H1 (cell line): ENCODE measurements at regions of chr10 and their contacts with region 1.

Region 1: DNA sequence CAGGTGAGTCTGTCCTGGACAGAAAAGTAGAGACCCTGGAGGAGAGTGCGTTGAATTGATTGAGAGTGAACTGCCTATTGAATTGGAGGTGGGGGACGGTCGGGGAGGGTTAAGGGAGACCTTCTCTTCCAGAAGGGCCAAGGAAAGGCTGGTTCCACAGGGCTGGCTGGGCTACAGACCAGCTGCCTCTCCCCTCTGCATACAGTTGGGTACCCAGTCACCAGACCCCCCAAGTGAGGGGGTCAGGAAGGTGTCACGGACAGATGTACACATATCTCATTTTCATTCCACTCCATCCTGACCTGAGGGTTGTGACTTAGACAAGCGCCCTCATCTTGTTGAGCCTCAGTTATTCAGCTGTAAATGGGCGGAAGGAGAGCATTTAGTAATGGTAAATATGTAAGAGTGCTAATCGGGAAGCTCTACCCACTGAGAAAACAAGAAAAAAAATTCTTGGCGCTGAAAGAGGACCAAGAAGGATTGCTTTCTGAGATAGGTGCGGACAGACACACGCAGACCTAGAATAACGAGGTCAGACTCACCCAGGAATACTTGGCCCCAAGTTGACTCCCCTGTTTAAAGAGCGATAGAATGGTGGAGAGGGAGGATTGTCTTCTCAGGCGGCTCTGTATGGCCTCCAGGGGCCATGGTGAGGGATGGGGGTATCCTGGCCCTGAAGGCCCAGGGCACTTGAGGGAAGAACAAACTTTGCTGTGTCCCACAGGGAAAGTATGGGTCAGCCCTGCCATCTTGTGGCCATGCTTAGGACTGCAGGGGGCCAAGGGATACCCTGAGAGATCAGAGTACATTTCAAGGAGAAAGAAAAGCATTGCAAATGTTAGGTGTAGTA is 7.2 kb upstream of the MBL2 start:
- DNase-seq: peak; percentile 73 to 98
- H3K4me3 ChIP-seq: no peak overlapping the region
- H3K27ac ChIP-seq: no peak overlapping the region
- H3K4me1 ChIP-seq: no peaks in the 10 kb centered on the region; a peak in 1 of 7 replicates
- H3K27me3 ChIP-seq: no peaks in the 10 kb centered on the region
- CTCF ChIP-seq: peak; percentile 89 to 97 (median 95)
- EP300 ChIP-seq: no peak
- POLR2A ChIP-seq: no peak
- RAD21 ChIP-seq: peak; percentile 97

Region 2: GRCh38 chr10:52644373-52645186 is 135.2 kb before region 1 on chr10:
- CTCF ChIA-PET with region 1: interaction called, 95 read pairs
- POLR2A ChIA-PET with region 1: no interaction called
- DNase-seq: peak in 1 of 2 experiments; percentile 59
- H3K4me3 ChIP-seq: no peak overlapping the region
- H3K27ac ChIP-seq: no peak overlapping the region
- H3K4me1 ChIP-seq: no peaks in the 10 kb centered on the region
- H3K27me3 ChIP-seq: no peaks in the 10 kb centered on the region
- CTCF ChIP-seq: peak in 2 of 3 experiments; percentile 72 to 81; a peak in 3 of 4 replicates
- EP300 ChIP-seq: no peak
- POLR2A ChIP-seq: no peak
- RAD21 ChIP-seq: peak; percentile 86 to 91

Region 3: GRCh38 chr10:52720018-52720417 is 59.7 kb before region 1 on chr10:
- CTCF ChIA-PET with region 1: interaction called, 10 read pairs
- POLR2A ChIA-PET with region 1: no interaction called
- DNase-seq: no peak
- H3K4me3 ChIP-seq: no peak overlapping the region
- H3K27ac ChIP-seq: no peak overlapping the region
- H3K4me1 ChIP-seq: no peaks in the 10 kb centered on the region
- H3K27me3 ChIP-seq: no peaks in the 10 kb centered on the region
- CTCF ChIP-seq: no peak
- EP300 ChIP-seq: no peak
- POLR2A ChIP-seq: no peak
- RAD21 ChIP-seq: no peak

Region 4: DNA sequence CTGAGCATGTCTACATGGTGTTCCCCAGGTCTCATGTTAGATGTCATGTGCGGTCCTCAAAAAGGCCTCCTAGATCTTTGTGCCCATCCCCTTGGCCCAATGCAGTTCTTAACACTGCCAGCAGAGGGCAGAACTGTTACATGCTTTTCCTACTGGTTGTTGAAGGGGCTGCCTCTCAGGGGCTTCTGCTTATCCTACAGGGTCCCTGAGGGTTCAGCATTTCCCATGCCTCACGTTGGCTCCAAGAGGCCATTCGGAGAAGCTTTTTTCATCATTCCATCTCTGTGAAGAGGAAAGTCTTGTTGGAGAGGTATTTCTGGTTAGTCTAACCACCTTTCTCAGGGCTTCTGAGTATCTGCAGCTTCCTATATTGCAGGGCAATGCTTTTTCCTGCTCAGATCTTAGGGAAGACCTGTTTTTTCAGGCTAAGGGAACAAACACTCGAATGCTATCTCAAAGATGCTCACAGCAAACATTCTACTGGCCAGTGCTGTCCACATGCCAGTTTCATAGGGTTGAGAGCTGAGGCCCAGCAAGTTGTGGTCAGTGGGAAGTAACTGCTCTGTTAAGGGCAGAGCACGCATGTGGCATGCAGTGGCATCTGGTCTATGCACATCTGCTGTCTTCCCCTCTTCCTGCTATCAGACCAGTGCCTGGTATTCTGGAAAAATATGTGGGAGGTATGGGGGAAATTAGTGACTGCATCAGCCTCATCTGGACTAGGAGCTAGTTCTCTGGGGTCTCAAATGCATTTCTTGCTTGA is 38.7 kb before region 1 on chr10:
- CTCF ChIA-PET with region 1: interaction called, 127 read pairs
- POLR2A ChIA-PET with region 1: no interaction called
- DNase-seq: peak; percentile 31 to 94
- H3K4me3 ChIP-seq: no peak overlapping the region
- H3K27ac ChIP-seq: no peak overlapping the region
- H3K4me1 ChIP-seq: no peaks in the 10 kb centered on the region
- H3K27me3 ChIP-seq: no peaks in the 10 kb centered on the region
- CTCF ChIP-seq: peak; percentile 73 to 95 (median 94)
- EP300 ChIP-seq: no peak
- POLR2A ChIP-seq: no peak
- RAD21 ChIP-seq: peak; percentile 81 to 89

Region 5: DNA sequence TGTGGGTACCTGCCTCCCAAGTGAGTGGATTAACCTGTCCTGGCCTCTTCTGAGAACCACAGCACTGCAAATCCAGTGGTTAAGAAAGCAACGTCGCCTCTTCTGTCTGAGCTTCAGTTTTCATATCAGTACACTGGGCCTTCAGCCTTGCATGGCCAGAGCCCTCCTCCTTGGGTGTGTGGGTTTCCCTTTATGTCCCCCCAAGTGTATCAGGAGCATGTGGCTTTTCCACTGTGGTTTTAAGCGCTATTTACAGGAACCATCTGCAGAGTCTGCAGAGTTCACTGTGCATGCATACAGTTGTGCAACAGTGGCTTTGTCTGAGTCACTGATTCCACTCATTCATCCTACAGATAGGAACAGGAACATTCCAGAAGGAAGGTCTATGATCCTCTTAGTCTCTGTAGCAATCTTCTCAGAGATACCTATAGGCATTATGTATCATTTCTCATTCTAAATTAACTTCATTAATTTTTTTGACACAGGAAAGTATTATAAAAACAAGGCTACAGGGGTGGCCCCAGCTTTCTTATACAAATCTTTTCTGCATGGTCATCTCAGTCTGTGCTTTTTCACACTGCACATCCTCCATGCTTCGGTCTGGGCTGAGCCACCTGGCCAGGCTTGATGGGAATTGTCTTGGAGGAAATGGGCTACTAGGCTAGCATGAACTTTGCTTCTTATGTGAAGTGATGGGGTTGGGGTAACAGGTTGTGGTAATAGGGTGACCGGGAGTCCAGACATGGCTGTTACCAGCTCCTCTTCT is 24.3 kb before region 1 on chr10:
- CTCF ChIA-PET with region 1: interaction called, 70 read pairs
- POLR2A ChIA-PET with region 1: no interaction called
- DNase-seq: no peak
- H3K4me3 ChIP-seq: no peak overlapping the region
- H3K27ac ChIP-seq: no peak overlapping the region
- H3K4me1 ChIP-seq: no peaks in the 10 kb centered on the region
- H3K27me3 ChIP-seq: no peaks in the 10 kb centered on the region
- CTCF ChIP-seq: no peak
- EP300 ChIP-seq: no peak
- POLR2A ChIP-seq: no peak
- RAD21 ChIP-seq: no peak